Activated CD4-positive, alpha-beta memory T cell treated with anti-CD3 and anti-CD28 coated beads for 36 hours (primary cell): ENCODE measurements at regions of chr1 and their contacts with region 1.

Region 1: DNA sequence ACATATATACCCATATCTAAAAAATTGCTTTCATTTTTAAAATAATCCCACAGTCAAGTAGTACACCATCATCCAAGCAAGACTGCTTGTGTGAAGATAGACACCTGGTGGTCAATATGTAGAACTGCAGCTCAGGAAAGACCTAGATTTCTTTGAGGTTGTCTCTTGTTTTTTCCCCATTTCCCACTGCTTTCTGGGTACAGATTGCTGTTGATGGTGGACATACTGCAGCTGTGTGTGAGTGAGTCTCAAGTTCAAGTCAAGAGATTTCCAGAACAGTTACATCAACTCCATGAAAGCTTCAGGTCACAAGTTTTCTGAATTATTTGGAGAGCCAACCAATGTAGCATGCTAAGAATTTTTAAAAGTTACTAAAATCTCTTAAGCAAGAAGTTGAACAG is 306.4 kb downstream of the DUSP10 start:
- DNase-seq: no peak
- H3K4me3 Mint-ChIP-seq: no peak overlapping the region
- H3K27ac Mint-ChIP-seq: no peak overlapping the region
- H3K4me1 Mint-ChIP-seq: peaks cover 30% of the 10 kb centered on the region
- H3K27me3 Mint-ChIP-seq: peaks cover 6% of the 10 kb centered on the region

Region 2: GRCh38 chr1:220810179-220810653 is 625.3 kb before region 1 on chr1:
- CTCF ChIA-PET with region 1: interaction called, 11 read pairs
- POLR2A ChIA-PET with region 1: no interaction called
- intact Hi-C with region 1: loop called (anchors 1 kb)
- DNase-seq: peak; percentile 76
- H3K4me3 Mint-ChIP-seq: peak overlapping the region; percentile 38
- H3K27ac Mint-ChIP-seq: no peak overlapping the region
- H3K4me1 Mint-ChIP-seq: no peaks in the 10 kb centered on the region
- H3K27me3 Mint-ChIP-seq: peaks cover 16% of the 10 kb centered on the region

Region 3: DNA sequence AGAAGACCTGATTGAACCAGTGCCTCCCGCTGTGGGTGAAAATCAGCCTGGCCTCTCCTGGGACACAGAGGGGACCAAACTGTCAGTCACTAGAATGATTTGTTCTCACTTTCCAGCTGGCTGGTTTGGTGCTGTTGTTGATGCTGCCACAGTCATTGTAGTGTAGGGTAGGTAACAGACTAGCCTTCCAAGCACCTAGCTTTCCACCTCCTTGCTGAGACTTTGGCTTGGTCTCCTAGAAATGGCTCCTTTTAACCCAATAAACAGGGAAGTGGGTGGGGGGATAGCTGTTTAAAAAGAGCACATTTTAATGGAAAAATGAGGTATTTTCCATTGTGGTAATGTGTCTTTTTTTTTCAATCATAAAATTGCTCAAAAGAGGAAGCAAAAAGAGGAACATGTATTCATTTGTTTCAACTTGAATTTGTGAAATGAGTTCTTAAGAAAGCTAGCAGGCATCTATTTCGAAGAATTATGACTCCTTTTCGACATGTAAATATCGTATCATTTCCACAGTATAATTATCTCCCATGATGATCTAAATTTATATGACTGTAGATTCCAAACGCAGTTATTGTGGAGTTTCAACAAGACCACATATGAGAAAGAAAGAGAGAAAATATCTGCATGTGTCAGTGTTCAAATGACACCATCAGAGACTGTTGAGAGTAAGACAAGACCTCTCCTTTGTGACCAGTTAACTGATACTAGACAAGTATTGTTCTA is 366.2 kb before region 1 on chr1:
- CTCF ChIA-PET with region 1: no interaction called
- POLR2A ChIA-PET with region 1: no interaction called
- intact Hi-C with region 1: loop called (anchors 5 kb)
- DNase-seq: no peak
- H3K4me3 Mint-ChIP-seq: no peak overlapping the region
- H3K27ac Mint-ChIP-seq: no peak overlapping the region
- H3K4me1 Mint-ChIP-seq: no peaks in the 10 kb centered on the region
- H3K27me3 Mint-ChIP-seq: peaks cover 5% of the 10 kb centered on the region

Region 4: DNA sequence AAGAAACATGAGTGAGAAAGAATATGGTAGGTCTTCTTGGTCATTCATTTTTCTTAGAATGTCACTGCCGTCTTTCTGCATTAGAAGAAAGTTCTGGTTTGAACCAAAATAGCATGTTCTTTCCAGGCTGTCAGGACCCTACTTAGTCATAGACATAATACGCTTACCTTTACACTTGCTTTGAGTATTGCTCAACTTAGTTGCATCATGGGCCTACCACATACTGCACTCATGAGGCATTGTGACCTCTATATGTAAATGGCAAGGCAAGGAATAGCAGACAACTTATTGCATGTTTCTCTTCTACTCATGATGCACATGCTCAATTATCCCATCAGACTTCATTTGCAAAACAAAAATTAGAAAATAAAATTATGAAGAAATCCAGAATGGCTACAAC is 141.3 kb before region 1 on chr1:
- CTCF ChIA-PET with region 1: interaction called, 3 read pairs
- POLR2A ChIA-PET with region 1: no interaction called
- intact Hi-C with region 1: loop called (anchors 10 kb)
- DNase-seq: no peak
- H3K4me3 Mint-ChIP-seq: no peak overlapping the region
- H3K27ac Mint-ChIP-seq: no peak overlapping the region
- H3K4me1 Mint-ChIP-seq: peaks cover 3% of the 10 kb centered on the region
- H3K27me3 Mint-ChIP-seq: no peaks in the 10 kb centered on the region

Region 5: DNA sequence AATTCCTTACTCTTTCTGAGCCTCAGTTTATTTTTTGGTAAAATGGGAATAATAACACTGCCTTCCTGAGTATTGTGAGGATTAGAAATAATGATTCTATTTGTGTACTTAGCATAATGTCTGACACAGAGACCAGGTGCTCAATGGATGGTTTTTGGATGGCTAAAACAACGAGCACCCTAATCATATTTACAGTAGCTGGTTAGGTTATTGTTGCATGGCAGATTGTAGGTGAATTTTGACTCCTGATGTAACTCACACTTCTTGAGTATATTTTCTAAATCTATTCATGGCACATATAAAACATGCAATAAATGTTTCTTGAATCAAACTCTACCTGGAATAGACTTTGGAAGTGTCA is 318.3 kb after region 1 on chr1:
- CTCF ChIA-PET with region 1: no interaction called
- POLR2A ChIA-PET with region 1: no interaction called
- intact Hi-C with region 1: loop called (anchors 1 kb)
- DNase-seq: no peak
- H3K4me3 Mint-ChIP-seq: no peak overlapping the region
- H3K27ac Mint-ChIP-seq: peak overlapping the region; percentile 19
- H3K4me1 Mint-ChIP-seq: peaks cover 33% of the 10 kb centered on the region
- H3K27me3 Mint-ChIP-seq: no peaks in the 10 kb centered on the region

Region 6: DNA sequence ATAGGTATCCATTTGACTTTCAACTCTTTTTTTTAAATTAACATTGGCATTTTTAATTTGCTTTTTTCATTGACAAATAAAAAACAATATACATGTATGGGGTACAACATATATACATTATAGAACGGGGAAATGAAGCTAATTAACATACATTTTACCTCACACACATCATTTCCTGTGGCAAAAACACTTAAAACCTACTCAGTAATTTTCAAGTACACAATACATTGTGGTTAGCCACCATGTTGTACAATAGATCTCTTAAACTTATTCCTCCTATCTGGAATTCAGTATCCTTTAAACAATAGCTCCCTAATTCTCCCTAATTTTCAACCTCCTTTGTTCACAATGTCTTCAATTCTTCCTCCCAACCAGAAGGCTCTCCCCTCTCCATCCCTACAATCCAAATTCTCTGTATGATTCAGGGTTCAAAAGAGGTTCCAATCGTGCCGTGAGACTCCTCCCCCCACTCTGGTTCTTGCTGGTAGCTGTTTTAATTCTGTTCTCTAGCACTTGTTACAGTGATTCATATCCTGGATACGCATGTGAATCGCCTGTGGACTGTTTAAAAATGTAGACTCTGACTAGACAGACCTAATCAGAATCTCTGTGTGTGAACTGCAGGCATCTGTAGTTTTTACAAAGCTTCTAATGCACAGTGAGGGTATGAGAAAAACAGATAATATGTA is 394.0 kb after region 1 on chr1:
- CTCF ChIA-PET with region 1: no interaction called
- POLR2A ChIA-PET with region 1: interaction called, 6 read pairs
- intact Hi-C with region 1: loop called (anchors 2 kb)
- DNase-seq: peak; percentile 83
- H3K4me3 Mint-ChIP-seq: peak overlapping the region; percentile 30
- H3K27ac Mint-ChIP-seq: peak overlapping the region; percentile 90
- H3K4me1 Mint-ChIP-seq: peaks cover 53% of the 10 kb centered on the region
- H3K27me3 Mint-ChIP-seq: no peaks in the 10 kb centered on the region